K562 (cell line): ENCODE measurements at regions of chr1 and their contacts with region 1.

Region 1: DNA sequence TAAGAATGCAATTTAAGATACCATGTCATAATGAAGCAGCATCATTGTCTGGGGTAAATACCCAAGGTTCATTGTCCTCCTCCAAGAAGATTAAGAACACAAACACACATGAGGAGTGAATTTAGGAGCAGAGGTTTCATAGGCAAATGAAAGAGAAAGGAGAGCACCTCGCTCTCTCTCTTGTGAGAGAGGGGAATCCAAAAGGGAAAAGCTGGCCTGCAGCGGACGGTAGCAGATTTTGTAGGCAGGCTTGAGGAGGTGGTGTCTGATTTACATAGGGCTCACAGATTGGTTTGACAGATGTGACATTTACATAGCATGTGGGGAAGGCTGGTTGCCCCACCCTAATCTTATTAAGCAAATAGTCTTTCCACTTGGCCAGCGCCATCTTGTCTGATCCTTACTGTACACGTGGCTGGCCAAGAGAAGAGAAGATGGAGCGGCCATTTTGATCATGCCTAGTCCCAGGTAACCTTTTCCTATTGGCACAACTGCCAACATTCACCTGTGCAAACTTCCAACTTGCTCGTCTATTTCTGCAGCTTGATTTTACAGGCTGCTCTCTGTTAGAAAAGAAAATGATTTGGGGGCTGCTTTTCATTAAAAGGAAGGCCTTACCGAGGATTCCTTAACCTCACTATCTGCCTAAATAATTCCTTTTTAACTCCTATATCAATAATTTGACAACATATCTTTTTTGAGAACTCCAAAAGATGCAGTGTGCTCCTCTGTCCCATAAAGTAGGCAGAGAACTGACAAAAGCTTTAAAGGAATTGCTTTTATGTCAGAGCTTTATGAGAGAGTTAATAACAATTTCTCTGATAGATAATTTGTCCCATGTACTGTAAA is 16.0 kb upstream of the LRRC7 start:
- DNase-seq: peak in 2 of 4 experiments; percentile 14 to 90
- ATAC-seq: peak; percentile 81
- H3K4me3 ChIP-seq: peak overlapping the region; percentile 22
- H3K27ac ChIP-seq: peak overlapping the region; percentile 64
- H3K4me1 ChIP-seq: peaks cover 0 to 2% of the 10 kb centered on the region in 2 experiments; a peak in 1 of 5 replicates
- H3K27me3 ChIP-seq: no peaks in the 10 kb centered on the region
- CTCF ChIP-seq: no peak
- EP300 ChIP-seq: no peak
- POLR2A ChIP-seq: peak; percentile 63
- RAD21 ChIP-seq: no peak

Region 2: DNA sequence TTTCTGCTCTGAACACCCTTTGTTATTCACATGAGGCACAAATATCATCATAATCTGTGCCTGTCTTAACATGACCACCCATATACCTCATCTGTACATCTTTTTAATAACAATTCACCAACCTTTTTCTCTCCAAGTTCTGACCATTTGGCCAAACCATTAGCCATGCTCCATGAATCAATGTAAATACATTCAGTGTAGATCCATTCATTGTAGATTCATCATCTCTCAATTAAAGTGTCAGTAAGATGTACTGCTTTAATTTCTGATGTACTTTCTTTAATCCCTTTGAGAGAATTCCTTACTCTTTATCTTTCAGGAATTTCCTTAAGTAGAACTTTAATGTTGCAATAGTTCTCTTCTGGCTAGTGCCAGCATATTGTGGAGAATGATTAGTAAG is 110.2 kb before region 1 on chr1:
- CTCF ChIA-PET with region 1: no interaction called
- POLR2A ChIA-PET with region 1: no interaction called
- in situ Hi-C with region 1: no loop called
- intact Hi-C with region 1: no loop called
- DNase-seq: no peak
- ATAC-seq: no peak
- H3K4me3 ChIP-seq: no peak overlapping the region
- H3K27ac ChIP-seq: no peak overlapping the region
- H3K4me1 ChIP-seq: no peaks in the 10 kb centered on the region
- H3K27me3 ChIP-seq: no peaks in the 10 kb centered on the region
- CTCF ChIP-seq: no peak
- EP300 ChIP-seq: no peak
- POLR2A ChIP-seq: no peak
- RAD21 ChIP-seq: no peak

Region 3: GRCh38 chr1:69540052-69540451 is 11.6 kb before region 1 on chr1:
- CTCF ChIA-PET with region 1: no interaction called
- POLR2A ChIA-PET with region 1: interaction called, 13 read pairs
- in situ Hi-C with region 1: no loop called
- intact Hi-C with region 1: no loop called
- DNase-seq: peak; percentile 13 to 89 (median 44)
- ATAC-seq: peak; percentile 93
- H3K4me3 ChIP-seq: no peak overlapping the region
- H3K27ac ChIP-seq: peak overlapping the region; percentile 52; the same call in 2 of the 3 replicates
- H3K4me1 ChIP-seq: peaks cover 0 to 20% of the 10 kb centered on the region in 2 experiments; a peak in 2 of 5 replicates
- H3K27me3 ChIP-seq: no peaks in the 10 kb centered on the region
- CTCF ChIP-seq: no peak
- EP300 ChIP-seq: peak; percentile 90
- POLR2A ChIP-seq: no peak
- RAD21 ChIP-seq: peak; percentile 3 to 19; a peak in 2 of 4 replicates

Region 4: DNA sequence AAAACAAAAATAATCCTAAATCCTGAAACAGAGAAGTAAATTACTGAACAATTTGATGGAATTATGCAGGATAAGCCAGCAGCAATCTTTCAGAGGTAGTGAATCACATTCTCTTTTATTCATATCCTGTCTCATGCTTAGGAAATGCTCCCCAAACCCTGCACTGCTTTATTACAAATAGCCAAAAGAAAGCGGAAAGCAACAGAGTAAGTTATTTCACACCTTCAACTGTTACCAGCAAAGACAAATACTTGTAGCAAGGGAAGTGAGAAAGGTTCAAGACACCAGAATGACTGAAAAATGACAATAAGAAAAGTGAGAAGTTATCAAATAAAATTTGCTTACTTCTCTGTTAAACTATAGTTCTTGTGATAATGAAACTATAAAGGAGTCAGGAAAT is 1523.0 kb after region 1 on chr1:
- CTCF ChIA-PET with region 1: no interaction called
- POLR2A ChIA-PET with region 1: no interaction called
- in situ Hi-C with region 1: loop called (anchors 10 kb)
- intact Hi-C with region 1: no loop called
- DNase-seq: no peak
- ATAC-seq: no peak
- H3K4me3 ChIP-seq: no peak overlapping the region
- H3K27ac ChIP-seq: no peak overlapping the region
- H3K4me1 ChIP-seq: no peaks in the 10 kb centered on the region
- H3K27me3 ChIP-seq: no peaks in the 10 kb centered on the region
- CTCF ChIP-seq: no peak
- EP300 ChIP-seq: no peak
- POLR2A ChIP-seq: no peak
- RAD21 ChIP-seq: no peak